Activated B cell treated with CpG ODN at 0.5 μM for 24 hours (primary cell): ENCODE measurements at regions of chr9 and their contacts with region 1.

Region 1: GRCh38 chr9:118503236-118503635 is 799.0 kb downstream of the TLR4 start:
- DNase-seq: no peak
- ATAC-seq: no peak
- H3K4me3 Mint-ChIP-seq: no peak overlapping the region
- H3K27ac Mint-ChIP-seq: no peak overlapping the region
- H3K4me1 Mint-ChIP-seq: no peaks in the 10 kb centered on the region
- H3K27me3 Mint-ChIP-seq: no peaks in the 10 kb centered on the region
- CTCF ChIP-seq: no peak

Region 2: DNA sequence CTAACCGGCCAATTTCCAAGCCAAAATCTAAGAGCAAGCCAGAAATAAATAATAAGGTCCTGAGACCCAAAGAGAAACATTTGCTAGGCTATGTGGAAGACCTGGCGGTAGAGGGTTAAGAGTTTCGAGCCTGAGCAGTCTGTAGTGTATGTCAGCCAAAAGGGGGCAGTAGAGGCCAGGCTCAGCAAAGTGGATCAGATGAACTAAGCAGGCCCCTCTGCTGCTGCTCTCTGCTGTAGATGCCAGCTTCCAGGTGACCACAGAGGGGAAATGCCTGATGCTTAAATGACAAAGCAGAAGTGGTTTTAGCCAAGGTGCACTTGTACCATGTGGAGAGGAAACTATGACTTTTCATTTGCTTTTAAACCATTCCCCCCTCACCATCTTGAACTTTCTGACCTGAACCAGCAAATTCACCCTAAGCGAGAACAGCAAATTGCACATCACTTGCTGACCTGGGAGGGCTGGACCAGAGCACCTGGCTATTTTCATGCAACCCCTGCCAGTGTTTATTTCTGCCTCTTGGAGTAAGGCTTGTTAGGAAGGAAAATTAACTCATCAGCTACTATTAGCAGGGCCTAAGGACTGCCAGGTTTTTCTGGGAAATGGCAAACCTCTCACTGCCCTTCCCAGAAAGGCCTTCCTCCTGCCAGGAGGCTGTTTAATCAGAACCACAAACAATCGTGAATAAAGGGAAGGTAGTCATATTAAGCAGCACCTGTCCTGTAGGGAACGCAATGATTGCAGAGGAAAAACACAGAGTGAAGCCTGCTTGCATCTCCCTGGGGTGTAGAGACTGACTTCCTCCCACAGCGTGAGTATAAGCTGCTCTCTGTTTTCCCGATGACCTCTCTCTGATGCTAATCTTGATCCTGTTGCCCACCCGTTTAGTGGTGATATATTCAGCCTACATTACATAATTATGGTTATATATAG is 19.1 kb after region 1 on chr9:
- CTCF ChIA-PET with region 1: no interaction called
- POLR2A ChIA-PET with region 1: no interaction called
- intact Hi-C with region 1: no loop called
- DNase-seq: no peak
- ATAC-seq: no peak
- H3K4me3 Mint-ChIP-seq: no peak overlapping the region
- H3K27ac Mint-ChIP-seq: no peak overlapping the region
- H3K4me1 Mint-ChIP-seq: no peaks in the 10 kb centered on the region
- H3K27me3 Mint-ChIP-seq: peaks cover 3% of the 10 kb centered on the region
- CTCF ChIP-seq: no peak

Region 3: DNA sequence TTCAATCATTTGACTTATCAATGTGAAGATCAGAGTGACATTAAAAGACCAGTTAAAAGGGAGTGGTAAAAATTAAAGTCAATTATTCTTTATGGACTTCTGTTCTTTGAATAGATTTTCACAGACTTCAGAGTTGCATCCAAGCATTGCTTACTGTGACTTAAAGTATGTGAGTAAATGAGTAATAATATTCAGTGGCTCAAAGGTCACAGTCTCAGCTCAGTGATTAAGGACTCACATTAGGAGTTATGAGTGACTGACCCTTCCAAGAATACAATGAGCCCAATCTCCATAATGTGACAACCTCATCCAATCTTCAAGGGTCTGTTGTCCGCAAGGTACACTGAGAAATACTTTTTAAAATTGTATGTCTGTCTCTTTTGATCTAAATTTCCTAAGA is 54.8 kb after region 1 on chr9:
- CTCF ChIA-PET with region 1: no interaction called
- POLR2A ChIA-PET with region 1: no interaction called
- intact Hi-C with region 1: loop called (anchors 10 kb)
- DNase-seq: no peak
- ATAC-seq: no peak
- H3K4me3 Mint-ChIP-seq: no peak overlapping the region
- H3K27ac Mint-ChIP-seq: no peak overlapping the region
- H3K4me1 Mint-ChIP-seq: no peaks in the 10 kb centered on the region
- H3K27me3 Mint-ChIP-seq: no peaks in the 10 kb centered on the region
- CTCF ChIP-seq: no peak